ENCODE measurements at regions of chr18 and their contacts with region 1.

Region 1: DNA sequence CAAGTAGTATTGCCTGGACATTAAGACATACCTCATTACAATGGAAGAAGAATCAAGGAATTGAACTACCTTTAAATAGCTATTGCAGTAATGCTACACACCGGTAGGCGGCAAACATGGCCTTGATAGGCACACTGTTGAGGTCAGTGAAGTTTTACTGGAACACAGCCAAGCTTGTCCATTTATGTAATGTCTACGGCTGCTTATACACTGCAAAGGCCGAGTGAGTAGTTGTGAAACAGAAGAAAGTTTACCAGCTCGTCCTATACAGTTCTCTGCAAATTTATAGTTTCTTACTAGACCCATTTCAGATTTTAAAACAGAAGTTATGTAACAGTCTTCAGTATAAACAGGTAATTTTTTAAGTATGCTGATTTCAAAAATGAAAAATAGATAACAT is 38.8 kb downstream of the PPP4R1 start:
- DNase-seq: peak; percentile 86
- H3K4me3 ChIP-seq: no peak overlapping the region
- H3K27ac ChIP-seq: no peak overlapping the region
- H3K4me1 ChIP-seq: no peaks in the 10 kb centered on the region
- H3K27me3 ChIP-seq: no peaks in the 10 kb centered on the region
- CTCF ChIP-seq: peak; percentile 84

Region 2: GRCh38 chr18:9614401-9615279 is 39.1 kb after region 1 on chr18 and contains the start of gene PPP4R1:
- intact Hi-C with region 1: loop called (anchors 5 kb)
- DNase-seq: peak; percentile 79
- H3K4me3 ChIP-seq: peak within 1 kb of the TSS; percentile 58
- H3K27ac ChIP-seq: peak within 1 kb of the TSS; percentile 90
- H3K4me1 ChIP-seq: peaks cover 7% of the 10 kb centered on the region
- H3K27me3 ChIP-seq: no peaks in the 10 kb centered on the region
- CTCF ChIP-seq: no peak
- total RNA-seq, gene PPP4R1: 52.5 to 77.5 TPM

Measured in colonic mucosa (tissue), 4 donors.